ENCODE measurements at regions of chr15 and their contacts with region 1.

Region 1: DNA sequence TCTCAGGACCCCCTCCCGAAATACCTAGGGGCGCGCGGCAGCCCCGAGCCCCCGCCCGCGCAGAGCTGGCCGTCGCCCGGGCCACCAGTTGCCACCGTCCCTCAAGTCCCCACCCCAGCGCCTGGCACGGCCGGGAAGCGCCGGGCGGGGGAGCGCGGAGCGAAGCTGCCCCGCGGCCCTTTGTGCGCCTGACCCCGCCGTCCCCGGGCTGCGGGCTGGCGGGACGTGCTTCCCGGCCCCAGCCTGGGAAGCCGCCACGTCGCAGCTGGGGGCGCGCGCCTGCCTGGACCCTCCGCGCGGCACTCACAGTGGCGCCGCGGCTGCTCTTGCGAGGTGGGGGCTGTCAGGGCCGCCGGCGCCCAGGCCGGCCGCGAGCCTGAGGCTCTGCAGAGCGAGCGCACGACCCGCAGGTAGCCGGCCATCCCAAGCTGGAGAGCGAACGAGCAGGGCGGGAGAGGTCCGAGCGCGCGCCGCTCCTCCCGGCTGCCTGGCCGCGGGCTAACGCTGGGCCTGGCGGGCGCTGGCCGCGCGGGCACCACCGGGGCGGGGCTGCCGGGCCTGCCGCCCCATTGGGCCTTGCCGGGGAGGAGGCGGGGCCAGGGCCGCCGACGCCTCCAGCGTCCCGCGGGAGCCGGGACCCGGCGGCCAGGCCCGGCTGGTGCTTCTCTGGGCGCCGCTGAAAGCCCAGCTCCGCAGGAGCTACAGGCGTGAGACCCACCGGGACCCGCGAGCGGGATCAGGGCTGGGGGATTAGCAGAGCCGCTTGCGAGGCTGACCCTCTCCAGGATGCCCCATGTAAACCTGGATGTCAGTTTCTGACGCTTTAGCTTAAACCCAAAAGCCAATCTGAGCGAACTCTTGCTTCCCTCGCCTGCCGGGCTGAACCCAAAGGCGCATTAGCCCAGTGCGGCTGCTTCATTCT is at the start of gene IDH2:
- DNase-seq: peak; percentile 72
- H3K4me3 Mint-ChIP-seq: peak within 1 kb of the TSS; percentile 89
- H3K27ac Mint-ChIP-seq: peak within 1 kb of the TSS; percentile 94
- H3K4me1 Mint-ChIP-seq: peaks cover 52% of the 10 kb centered on the region
- H3K27me3 Mint-ChIP-seq: peaks cover 12% of the 10 kb centered on the region
- total RNA-seq, gene IDH2: 94.1 and 96.3 TPM in 2 replicates

Region 2: DNA sequence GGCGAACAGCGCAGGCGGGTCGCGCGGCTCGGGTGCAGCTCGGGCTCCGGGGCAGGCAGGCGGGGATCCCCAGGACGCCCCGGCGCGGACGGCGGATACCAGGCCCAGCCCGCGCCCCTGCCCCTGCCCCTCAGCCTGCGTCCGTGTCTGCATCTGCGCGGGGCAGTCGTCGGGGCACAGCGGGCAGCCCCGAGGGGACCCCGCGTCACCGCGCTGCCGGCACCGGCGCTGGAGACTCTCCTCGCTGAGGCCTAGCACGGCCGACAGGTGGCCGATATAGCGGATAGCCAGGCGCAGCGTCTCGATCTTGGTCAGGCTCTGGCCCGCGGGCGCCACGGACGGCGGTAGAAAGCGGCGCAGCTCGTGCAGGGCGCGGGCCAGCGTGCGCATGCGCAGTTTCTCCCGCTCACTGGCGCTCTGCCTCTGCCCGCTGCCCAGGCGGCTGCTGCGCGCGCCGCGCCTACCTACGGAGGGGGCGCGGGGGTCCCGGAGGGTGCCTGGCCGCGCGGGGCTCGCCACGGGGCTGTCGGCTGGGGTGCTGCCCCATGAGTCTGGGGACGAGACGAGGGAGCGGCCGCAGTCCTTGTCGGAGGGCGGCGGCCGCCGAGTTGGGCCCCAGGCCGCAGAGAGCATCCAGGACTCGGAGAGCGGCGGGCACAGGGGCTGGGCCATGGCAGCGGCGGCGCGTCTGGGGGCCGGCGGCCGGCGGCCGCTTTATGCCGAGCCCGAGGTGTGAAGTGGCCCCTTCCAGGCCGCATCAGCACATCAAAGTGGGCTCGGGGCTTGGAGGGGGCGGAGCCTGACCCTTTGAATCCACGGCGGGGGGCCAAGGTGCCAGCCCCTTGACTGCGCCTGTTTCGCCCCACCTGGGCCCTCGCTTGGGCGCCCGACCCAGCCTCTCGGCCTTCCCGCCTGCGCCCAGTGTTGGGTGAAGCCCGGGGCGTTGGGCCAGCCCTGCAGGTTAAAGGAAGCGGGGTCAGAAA is 351.4 kb before region 1 on chr15 and contains the start of gene MESP1:
- intact Hi-C with region 1: loop called (anchors 5 kb)
- DNase-seq: peak; percentile 84
- H3K4me3 Mint-ChIP-seq: peak within 1 kb of the TSS; percentile 84
- H3K27ac Mint-ChIP-seq: peak within 1 kb of the TSS; percentile 23
- H3K4me1 Mint-ChIP-seq: no peaks in the 10 kb centered on the region
- H3K27me3 Mint-ChIP-seq: peaks cover 29% of the 10 kb centered on the region
- total RNA-seq, gene MESP1: 4.6 and 6.6 TPM in 2 replicates

Region 3: GRCh38 chr15:90037961-90038631 is 64.1 kb before region 1 on chr15:
- intact Hi-C with region 1: loop called (anchors 1 kb)
- DNase-seq: peak; percentile 48
- H3K4me3 Mint-ChIP-seq: peak overlapping the region; percentile 63
- H3K27ac Mint-ChIP-seq: peak overlapping the region; percentile 89
- H3K4me1 Mint-ChIP-seq: peaks cover 77% of the 10 kb centered on the region
- H3K27me3 Mint-ChIP-seq: no peaks in the 10 kb centered on the region

Region 4: GRCh38 chr15:90086868-90087268 is 15.4 kb before region 1 on chr15:
- intact Hi-C with region 1: loop called (anchors 1 kb)
- DNase-seq: no peak
- H3K4me3 Mint-ChIP-seq: no peak overlapping the region
- H3K27ac Mint-ChIP-seq: no peak overlapping the region
- H3K4me1 Mint-ChIP-seq: peaks cover 4% of the 10 kb centered on the region
- H3K27me3 Mint-ChIP-seq: no peaks in the 10 kb centered on the region

Region 5: GRCh38 chr15:90114451-90114901 is 12.2 kb after region 1 on chr15:
- intact Hi-C with region 1: no loop called
- DNase-seq: no peak
- H3K4me3 Mint-ChIP-seq: no peak overlapping the region
- H3K27ac Mint-ChIP-seq: no peak overlapping the region
- H3K4me1 Mint-ChIP-seq: no peaks in the 10 kb centered on the region
- H3K27me3 Mint-ChIP-seq: peaks cover 6% of the 10 kb centered on the region

Region 6: GRCh38 chr15:90165659-90166421 is 63.6 kb after region 1 on chr15:
- intact Hi-C with region 1: loop called (anchors 2 kb)
- DNase-seq: peak; percentile 21
- H3K4me3 Mint-ChIP-seq: peak overlapping the region; percentile 40
- H3K27ac Mint-ChIP-seq: peak overlapping the region; percentile 62
- H3K4me1 Mint-ChIP-seq: peaks cover 21% of the 10 kb centered on the region
- H3K27me3 Mint-ChIP-seq: no peaks in the 10 kb centered on the region

Region 7: DNA sequence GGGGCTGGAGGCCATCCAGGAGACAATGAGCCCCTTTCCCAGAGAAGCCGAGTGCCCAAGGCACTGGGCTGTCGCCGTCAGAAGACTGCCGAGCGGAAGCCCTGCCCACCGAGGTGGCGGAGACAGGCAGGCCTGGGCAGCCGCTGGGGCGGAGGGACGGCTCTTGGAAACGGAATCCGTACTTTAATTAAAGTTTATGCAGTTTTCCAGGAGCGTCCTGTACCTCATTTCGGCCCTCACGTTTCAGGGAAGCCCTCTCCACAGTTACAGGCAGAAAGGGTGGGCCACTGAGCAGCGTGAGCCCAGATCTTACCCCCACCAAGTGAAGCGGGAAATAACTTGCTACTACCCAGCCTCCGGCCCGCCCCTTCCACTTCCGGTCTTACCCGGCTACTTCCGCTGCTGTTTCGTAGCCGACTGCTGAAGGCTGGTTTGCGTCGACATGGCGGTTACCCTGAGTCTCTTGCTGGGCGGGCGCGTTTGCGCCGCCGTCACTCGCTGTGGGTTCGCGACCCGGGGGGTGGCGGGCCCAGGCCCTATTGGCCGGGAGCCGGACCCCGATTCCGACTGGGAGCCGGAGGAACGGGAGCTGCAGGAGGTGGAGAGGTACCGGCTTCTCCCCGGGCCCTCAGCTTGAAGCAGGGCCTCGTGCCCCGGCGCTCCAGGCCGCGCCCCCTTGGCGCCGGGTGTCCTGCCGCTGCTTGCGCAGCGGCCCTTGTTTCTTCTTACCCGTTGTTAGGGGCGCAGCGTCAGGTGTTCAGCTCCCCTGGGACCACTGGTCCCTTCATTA is 163.2 kb after region 1 on chr15 and contains the start of gene NGRN:
- intact Hi-C with region 1: loop called (anchors 1 kb)
- DNase-seq: peak; percentile 89
- H3K4me3 Mint-ChIP-seq: peak within 1 kb of the TSS; percentile 99
- H3K27ac Mint-ChIP-seq: peak within 1 kb of the TSS; percentile 99
- H3K4me1 Mint-ChIP-seq: peaks cover 43% of the 10 kb centered on the region
- H3K27me3 Mint-ChIP-seq: no peaks in the 10 kb centered on the region
- total RNA-seq, gene NGRN: 39.0 and 39.9 TPM in 2 replicates

Measured in activated T-helper 1 cell treated with anti-CD3 and anti-CD28 coated beads, Interleukin-12 subunit alpha, Interleukin-12 subunit beta, Interleukin-2, Interleukin-4 antibody, amounts not matched to agents 30 ng/mL and 10 ng/mL and 1 ng/mL, durations not matched to agents 14 hours and 24 hours and 36 hours (primary cell).